Ascending aorta (tissue), 2 donors: ENCODE measurements at regions of chr1 and their contacts with region 1.

Region 1: DNA sequence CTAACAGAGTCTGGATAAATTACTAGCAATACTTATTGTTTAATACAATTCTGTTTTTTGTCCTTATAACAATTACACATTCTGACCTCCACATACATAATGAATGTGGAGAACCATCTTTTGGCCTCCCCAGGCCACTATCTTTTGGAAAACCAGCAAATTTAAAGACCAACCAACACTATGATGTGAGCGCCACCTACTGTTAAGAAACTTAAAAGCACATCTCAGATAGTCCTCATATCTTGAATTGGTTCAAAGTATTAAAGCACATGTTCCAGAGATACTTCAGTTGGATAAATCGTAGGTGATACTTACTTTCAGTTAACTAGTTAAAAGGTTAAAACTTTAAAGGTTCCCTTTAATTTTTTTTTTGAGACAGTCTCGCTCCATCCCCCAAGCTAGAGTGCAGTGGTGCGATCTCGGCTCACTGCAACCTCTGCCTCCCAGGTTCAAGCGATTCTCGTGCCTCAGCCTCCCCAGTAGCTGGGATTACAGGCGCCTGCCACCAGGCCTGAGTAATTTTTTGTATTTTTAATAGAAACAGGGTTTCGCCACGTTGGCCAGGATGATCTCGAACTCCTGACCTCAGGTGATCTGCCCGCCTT is 29.3 kb upstream of the USP1 start:
- DNase-seq: no peak
- H3K4me3 ChIP-seq: no peak overlapping the region
- H3K27ac ChIP-seq: no peak overlapping the region
- H3K4me1 ChIP-seq: no peaks in the 10 kb centered on the region
- H3K27me3 ChIP-seq: no peaks in the 10 kb centered on the region
- CTCF ChIP-seq: peak; percentile 57 to 80 (median 67)

Region 2: GRCh38 chr1:62175568-62176179 is 231.8 kb before region 1 on chr1:
- intact Hi-C with region 1: loop called (anchors 2 kb)
- DNase-seq: no peak
- H3K4me3 ChIP-seq: no peak overlapping the region
- H3K27ac ChIP-seq: no peak overlapping the region
- H3K4me1 ChIP-seq: no peaks in the 10 kb centered on the region
- H3K27me3 ChIP-seq: no peaks in the 10 kb centered on the region
- CTCF ChIP-seq: peak; percentile 18 to 74 (median 50)